OCI-LY7 (cell line): ENCODE measurements at regions of chr5 and their contacts with region 1.

Region 1: GRCh38 chr5:81165493-81166119 is 67.5 kb upstream of the CKMT2 start:
- DNase-seq: peak; percentile 57
- H3K4me3 ChIP-seq: no peak overlapping the region
- H3K27ac ChIP-seq: no peak overlapping the region
- H3K4me1 ChIP-seq: no peaks in the 10 kb centered on the region
- CTCF ChIP-seq: peak; percentile 90

Region 2: GRCh38 chr5:80686757-80687156 is 478.8 kb before region 1 on chr5:
- CTCF ChIA-PET with region 1: no interaction called
- POLR2A ChIA-PET with region 1: no interaction called
- intact Hi-C with region 1: loop called (anchors 5 kb)
- DNase-seq: peak; percentile 19
- H3K4me3 ChIP-seq: no peak overlapping the region
- H3K27ac ChIP-seq: no peak overlapping the region
- H3K4me1 ChIP-seq: no peaks in the 10 kb centered on the region
- CTCF ChIP-seq: peak; percentile 71